ENCODE measurements at regions of chr10 and their contacts with region 1.

Region 1: GRCh38 chr10:70558871-70559810 is 43.4 kb downstream of the PRF1 start:
- DNase-seq: peak; percentile 72
- H3K4me3 ChIP-seq: no peak overlapping the region
- H3K27ac ChIP-seq: peak overlapping the region; percentile 73
- H3K4me1 ChIP-seq: peaks cover 74% of the 10 kb centered on the region
- CTCF ChIP-seq: peak; percentile 83

Region 2: GRCh38 chr10:70283445-70284399 is 275.4 kb before region 1 on chr10 and contains the start of gene NPFFR1:
- CTCF ChIA-PET with region 1: no interaction called
- POLR2A ChIA-PET with region 1: no interaction called
- intact Hi-C with region 1: no loop called
- DNase-seq: no peak
- H3K4me3 ChIP-seq: no peak within 1 kb of the TSS
- H3K27ac ChIP-seq: no peak within 1 kb of the TSS
- H3K4me1 ChIP-seq: peaks cover 17% of the 10 kb centered on the region
- CTCF ChIP-seq: no peak
- total RNA-seq, gene NPFFR1: not detected in 2 replicates

Region 3: GRCh38 chr10:70575874-70576802 is 17.0 kb after region 1 on chr10:
- CTCF ChIA-PET with region 1: interaction called, 3 read pairs
- POLR2A ChIA-PET with region 1: interaction called, 15 read pairs
- intact Hi-C with region 1: loop called (anchors 1 kb)
- DNase-seq: peak; percentile 92
- H3K4me3 ChIP-seq: peak overlapping the region; percentile 46
- H3K27ac ChIP-seq: peak overlapping the region; percentile 95
- H3K4me1 ChIP-seq: peaks cover 69% of the 10 kb centered on the region
- CTCF ChIP-seq: no peak

Measured in OCI-LY7 (cell line).